MCF 10A (cell line): ENCODE measurements at regions of chr4 and their contacts with region 1.

Region 1: GRCh38 chr4:114378306-114378903 is 220.2 kb upstream of the UGT8 start:
- DNase-seq: peak; percentile 55
- H3K4me3 Mint-ChIP-seq: no peak overlapping the region
- H3K27ac Mint-ChIP-seq: no peak overlapping the region
- H3K4me1 Mint-ChIP-seq: no peaks in the 10 kb centered on the region
- H3K27me3 Mint-ChIP-seq: no peaks in the 10 kb centered on the region
- CTCF ChIP-seq: peak; percentile 70

Region 2: DNA sequence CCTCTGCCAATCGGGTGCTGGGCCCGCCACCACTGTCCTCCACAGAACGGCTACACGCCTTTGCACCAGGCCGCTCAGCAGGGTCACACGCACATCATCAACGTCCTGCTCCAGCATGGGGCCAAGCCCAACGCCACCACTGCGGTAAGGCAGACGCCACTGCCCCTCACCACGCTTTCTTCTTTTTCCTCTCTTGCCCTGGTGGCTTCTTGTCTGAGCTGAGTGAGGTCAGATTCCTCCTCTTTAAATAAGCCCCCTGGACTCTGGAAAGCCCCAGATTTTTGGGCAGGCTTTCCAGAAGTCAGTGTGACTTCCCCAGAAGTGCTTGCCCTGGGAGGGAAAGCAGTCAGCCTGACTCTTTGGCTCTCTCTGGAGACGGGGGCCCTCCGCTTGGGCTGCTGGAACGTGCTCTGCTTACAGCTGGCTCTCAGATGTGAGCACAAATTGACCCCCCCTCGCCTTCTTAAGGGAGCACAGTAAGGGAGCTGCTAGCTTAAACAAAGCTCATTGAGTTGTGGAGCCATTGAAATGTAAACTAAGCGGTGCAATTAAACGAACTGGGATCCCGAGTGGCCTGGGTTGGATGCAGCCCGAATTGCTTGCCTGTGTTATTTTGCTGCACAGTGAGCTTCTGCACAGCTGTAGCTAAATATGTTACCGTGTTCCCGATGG is 1085.9 kb before region 1 on chr4:
- CTCF ChIA-PET with region 1: no interaction called
- POLR2A ChIA-PET with region 1: no interaction called
- intact Hi-C with region 1: loop called (anchors 1 kb)
- DNase-seq: no peak
- H3K4me3 Mint-ChIP-seq: no peak overlapping the region
- H3K27ac Mint-ChIP-seq: no peak overlapping the region
- H3K4me1 Mint-ChIP-seq: no peaks in the 10 kb centered on the region
- H3K27me3 Mint-ChIP-seq: no peaks in the 10 kb centered on the region
- CTCF ChIP-seq: no peak

Region 3: GRCh38 chr4:113781439-113782040 is 596.9 kb before region 1 on chr4:
- CTCF ChIA-PET with region 1: interaction called, 15 read pairs
- POLR2A ChIA-PET with region 1: no interaction called
- intact Hi-C with region 1: loop called (anchors 2 kb)
- DNase-seq: peak; percentile 53
- H3K4me3 Mint-ChIP-seq: no peak overlapping the region
- H3K27ac Mint-ChIP-seq: no peak overlapping the region
- H3K4me1 Mint-ChIP-seq: peaks cover 20% of the 10 kb centered on the region
- H3K27me3 Mint-ChIP-seq: no peaks in the 10 kb centered on the region
- CTCF ChIP-seq: peak; percentile 38

Region 4: DNA sequence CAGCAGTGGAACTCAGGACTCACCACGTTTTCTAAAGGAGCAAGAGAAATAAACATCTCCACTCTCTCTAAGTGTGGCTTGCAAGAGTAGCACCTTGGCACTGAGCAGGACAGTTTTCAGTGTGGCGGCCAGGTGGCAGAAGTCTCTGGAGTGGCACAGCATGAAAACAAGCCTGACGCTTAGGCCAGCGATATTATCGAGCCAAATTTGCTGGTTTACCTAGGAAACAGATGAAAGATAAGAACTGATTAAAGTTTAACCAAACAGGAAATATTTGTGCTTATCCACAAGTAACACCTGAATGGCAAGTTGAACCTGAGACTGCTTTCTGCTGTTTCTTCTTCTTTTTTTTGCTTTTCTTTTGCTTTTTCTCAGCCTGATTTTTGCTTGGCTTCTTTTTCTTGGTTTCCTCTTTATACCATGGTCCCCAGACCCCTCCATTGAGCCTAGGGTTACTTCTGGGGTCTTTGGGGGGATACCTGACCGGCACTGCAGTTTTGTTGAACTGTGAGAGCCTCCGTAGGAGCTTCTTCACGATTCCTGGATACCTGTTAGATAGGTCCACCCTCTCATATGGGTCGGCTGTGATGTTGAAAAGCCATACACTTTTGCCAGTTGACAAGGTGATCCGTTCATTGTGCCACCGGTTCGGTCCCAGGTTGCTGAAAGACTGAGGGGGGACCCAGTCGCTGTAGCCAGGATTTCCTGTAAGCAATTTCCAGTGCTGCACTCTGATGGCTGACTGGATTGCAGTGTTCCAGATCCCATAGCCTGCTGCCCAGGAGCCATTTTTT is 476.2 kb before region 1 on chr4:
- CTCF ChIA-PET with region 1: no interaction called
- POLR2A ChIA-PET with region 1: no interaction called
- intact Hi-C with region 1: loop called (anchors 10 kb)
- DNase-seq: no peak
- H3K4me3 Mint-ChIP-seq: no peak overlapping the region
- H3K27ac Mint-ChIP-seq: peak overlapping the region; percentile 10
- H3K4me1 Mint-ChIP-seq: no peaks in the 10 kb centered on the region
- H3K27me3 Mint-ChIP-seq: no peaks in the 10 kb centered on the region
- CTCF ChIP-seq: no peak

Region 5: GRCh38 chr4:113952452-113953029 is 425.9 kb before region 1 on chr4:
- CTCF ChIA-PET with region 1: interaction called, 8 read pairs
- POLR2A ChIA-PET with region 1: interaction called, 4 read pairs
- intact Hi-C with region 1: loop called (anchors 1 kb)
- DNase-seq: peak; percentile 64
- H3K4me3 Mint-ChIP-seq: no peak overlapping the region
- H3K27ac Mint-ChIP-seq: no peak overlapping the region
- H3K4me1 Mint-ChIP-seq: peaks cover 37% of the 10 kb centered on the region
- H3K27me3 Mint-ChIP-seq: no peaks in the 10 kb centered on the region
- CTCF ChIP-seq: peak; percentile 73

Region 6: GRCh38 chr4:114076899-114077570 is 301.4 kb before region 1 on chr4:
- CTCF ChIA-PET with region 1: interaction called, 5 read pairs
- POLR2A ChIA-PET with region 1: no interaction called
- intact Hi-C with region 1: loop called (anchors 5 kb)
- DNase-seq: peak; percentile 22
- H3K4me3 Mint-ChIP-seq: no peak overlapping the region
- H3K27ac Mint-ChIP-seq: peak overlapping the region; percentile 23
- H3K4me1 Mint-ChIP-seq: peaks cover 9% of the 10 kb centered on the region
- H3K27me3 Mint-ChIP-seq: no peaks in the 10 kb centered on the region
- CTCF ChIP-seq: no peak

Region 7: DNA sequence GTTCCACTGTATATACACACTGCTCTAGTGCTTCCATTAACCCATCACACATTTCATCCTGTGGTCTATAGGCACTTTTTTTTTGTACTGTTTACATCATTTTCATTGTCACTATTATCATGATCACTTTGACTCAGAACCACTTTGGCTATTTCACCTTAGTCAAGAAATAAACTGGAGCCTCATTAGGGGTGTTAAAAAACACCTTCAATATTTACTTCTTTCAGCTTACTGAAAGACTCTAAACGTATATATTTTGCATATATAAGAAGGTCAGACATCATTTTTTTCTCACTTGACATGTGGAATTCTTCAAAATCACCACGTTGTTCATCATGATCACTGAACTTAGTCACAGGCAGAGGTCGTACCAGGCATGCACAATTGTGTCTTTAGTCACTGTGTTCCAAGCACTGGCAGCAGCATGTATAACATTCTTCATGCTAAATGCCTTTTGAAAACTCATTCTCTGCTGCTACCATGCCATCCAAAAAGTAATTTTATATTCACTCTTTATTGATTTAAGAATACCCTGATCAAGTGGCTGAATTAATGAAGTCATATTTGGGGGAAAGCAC is 169.7 kb before region 1 on chr4:
- CTCF ChIA-PET with region 1: interaction called, 6 read pairs
- POLR2A ChIA-PET with region 1: interaction called, 5 read pairs
- intact Hi-C with region 1: loop called (anchors 10 kb)
- DNase-seq: peak; percentile 10
- H3K4me3 Mint-ChIP-seq: no peak overlapping the region
- H3K27ac Mint-ChIP-seq: no peak overlapping the region
- H3K4me1 Mint-ChIP-seq: no peaks in the 10 kb centered on the region
- H3K27me3 Mint-ChIP-seq: no peaks in the 10 kb centered on the region
- CTCF ChIP-seq: no peak